ENCODE measurements at regions of chr1 and their contacts with region 1.

Region 1: DNA sequence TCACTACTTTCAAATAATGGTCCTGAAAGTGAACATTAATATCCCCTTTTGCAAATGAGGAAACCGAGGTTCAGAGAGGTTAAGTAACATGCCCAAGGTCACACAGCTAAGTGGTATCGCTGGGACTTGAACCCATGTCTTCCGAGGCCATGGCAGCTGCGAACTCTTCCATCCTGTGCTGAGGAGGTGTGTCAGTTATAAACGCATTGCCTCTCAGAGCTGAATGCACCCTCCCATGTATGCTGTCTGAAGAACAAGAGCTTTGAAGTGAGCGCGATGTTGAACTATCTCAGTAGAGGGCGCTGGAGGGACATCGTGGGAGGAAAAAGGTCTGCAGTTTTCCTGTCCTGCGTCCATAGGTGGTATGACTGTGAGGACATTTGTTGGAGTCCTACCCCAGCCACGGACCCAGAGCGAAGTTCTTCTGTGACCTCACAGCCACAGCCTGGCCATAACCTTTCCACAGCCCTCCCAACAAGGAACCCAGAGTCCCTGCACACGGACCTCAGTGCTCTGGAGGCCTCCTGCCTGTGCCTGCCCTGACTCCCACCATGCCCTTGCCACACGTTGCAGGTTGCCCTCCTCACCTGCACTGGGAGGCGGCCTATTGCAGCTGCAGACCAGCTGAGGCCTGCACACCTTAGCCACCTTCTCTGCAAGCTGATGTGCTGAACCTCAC is 7.5 kb downstream of the MYOC start:
- DNase-seq: peak; percentile 49
- ATAC-seq: peak; percentile 91
- H3K4me3 ChIP-seq: no peak overlapping the region
- H3K27ac ChIP-seq: no peak overlapping the region
- H3K4me1 ChIP-seq: no peaks in the 10 kb centered on the region
- H3K27me3 ChIP-seq: no peaks in the 10 kb centered on the region
- CTCF ChIP-seq: peak; percentile 66 to 82 (median 82)
- EP300 ChIP-seq: no peak
- POLR2A ChIP-seq: no peak
- RAD21 ChIP-seq: peak; percentile 70

Region 2: GRCh38 chr1:171566467-171566866 is 78.5 kb before region 1 on chr1:
- CTCF ChIA-PET with region 1: interaction called, 16 read pairs
- POLR2A ChIA-PET with region 1: interaction called, 5 read pairs
- RAD21 ChIA-PET with region 1: interaction called, 4 read pairs
- SMC1A ChIA-PET with region 1: interaction called, 16 read pairs
- in situ Hi-C with region 1: no loop called
- intact Hi-C with region 1: no loop called
- DNase-seq: no peak
- ATAC-seq: no peak
- H3K4me3 ChIP-seq: no peak overlapping the region
- H3K27ac ChIP-seq: no peak overlapping the region
- H3K4me1 ChIP-seq: no peaks in the 10 kb centered on the region
- H3K27me3 ChIP-seq: no peaks in the 10 kb centered on the region
- CTCF ChIP-seq: peak in 2 of 3 experiments; percentile 5 to 28; a peak in 2 of 6 replicates
- EP300 ChIP-seq: no peak
- POLR2A ChIP-seq: no peak
- RAD21 ChIP-seq: no peak

Region 3: GRCh38 chr1:171610385-171610784 is 34.6 kb before region 1 on chr1:
- CTCF ChIA-PET with region 1: interaction called, 22 read pairs
- POLR2A ChIA-PET with region 1: interaction called, 5 read pairs
- RAD21 ChIA-PET with region 1: interaction called, 12 read pairs
- SMC1A ChIA-PET with region 1: interaction called, 16 read pairs
- in situ Hi-C with region 1: no loop called
- intact Hi-C with region 1: loop called (anchors 5 kb)
- DNase-seq: no peak
- ATAC-seq: peak; percentile 74
- H3K4me3 ChIP-seq: no peak overlapping the region
- H3K27ac ChIP-seq: no peak overlapping the region
- H3K4me1 ChIP-seq: peaks cover 5% of the 10 kb centered on the region
- H3K27me3 ChIP-seq: no peaks in the 10 kb centered on the region
- CTCF ChIP-seq: no peak
- EP300 ChIP-seq: peak; percentile 38 to 68; a peak in 3 of 4 replicates
- POLR2A ChIP-seq: no peak
- RAD21 ChIP-seq: no peak

Region 4: GRCh38 chr1:171654942-171655745 is 10.2 kb after region 1 on chr1:
- CTCF ChIA-PET with region 1: interaction called, 68 read pairs
- POLR2A ChIA-PET with region 1: interaction called, 3 read pairs
- RAD21 ChIA-PET with region 1: interaction called, 19 read pairs
- SMC1A ChIA-PET with region 1: interaction called, 32 read pairs
- in situ Hi-C with region 1: no loop called
- intact Hi-C with region 1: no loop called
- DNase-seq: no peak
- ATAC-seq: peak; percentile 97
- H3K4me3 ChIP-seq: no peak overlapping the region
- H3K27ac ChIP-seq: no peak overlapping the region
- H3K4me1 ChIP-seq: no peaks in the 10 kb centered on the region
- H3K27me3 ChIP-seq: peaks cover 0 to 3% of the 10 kb centered on the region in 2 experiments; a peak in 1 of 4 replicates
- CTCF ChIP-seq: peak; percentile 62 to 89 (median 86)
- EP300 ChIP-seq: no peak
- POLR2A ChIP-seq: no peak
- RAD21 ChIP-seq: peak; percentile 62

Region 5: DNA sequence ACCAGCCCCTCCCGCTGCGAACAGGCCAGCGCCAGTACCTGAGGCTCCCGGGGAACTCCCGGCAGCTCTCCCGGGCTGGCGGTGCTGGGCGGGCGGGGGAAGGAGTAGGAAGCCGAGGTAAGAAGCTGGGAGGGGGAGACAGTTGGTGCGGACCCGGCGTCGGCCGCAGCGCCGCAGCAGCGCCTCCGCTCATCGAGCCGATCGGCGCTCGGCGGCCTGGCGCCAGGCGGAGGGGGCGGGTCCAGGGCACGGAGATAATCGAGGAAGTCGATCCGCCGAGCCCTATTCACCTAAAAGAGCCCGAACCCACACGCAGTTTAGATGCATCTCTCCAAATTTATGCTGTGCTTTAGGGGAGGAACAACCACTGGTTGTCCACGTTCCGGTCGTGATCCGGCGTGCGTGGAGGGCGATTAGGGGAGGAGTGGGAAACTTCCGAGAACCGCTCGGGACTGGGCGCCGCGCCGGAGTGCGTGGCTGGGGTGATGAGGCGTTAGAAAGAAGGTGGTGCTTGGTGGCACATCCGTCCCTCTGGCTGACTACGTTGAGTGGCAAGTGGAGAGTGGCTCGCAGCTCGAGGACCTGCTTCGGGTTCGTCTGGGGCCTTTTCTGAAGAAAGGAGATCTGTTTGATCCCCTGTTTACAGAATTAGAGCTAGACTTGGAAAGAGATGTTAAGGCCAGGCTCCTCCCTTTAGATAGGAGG is 97.1 kb after region 1 on chr1 and contains the start of gene VAMP4:
- CTCF ChIA-PET with region 1: interaction called, 9 read pairs
- POLR2A ChIA-PET with region 1: no interaction called
- RAD21 ChIA-PET with region 1: interaction called, 11 read pairs
- SMC1A ChIA-PET with region 1: interaction called, 4 read pairs
- in situ Hi-C with region 1: no loop called
- intact Hi-C with region 1: no loop called
- DNase-seq: peak; percentile 59
- ATAC-seq: peak; percentile 95
- H3K4me3 ChIP-seq: peak within 1 kb of the TSS; percentile 83
- H3K27ac ChIP-seq: peak within 1 kb of the TSS; percentile 92
- H3K4me1 ChIP-seq: peaks cover 4% of the 10 kb centered on the region
- H3K27me3 ChIP-seq: no peaks in the 10 kb centered on the region
- CTCF ChIP-seq: no peak
- EP300 ChIP-seq: no peak
- POLR2A ChIP-seq: peak; percentile 91
- RAD21 ChIP-seq: no peak
- polyA plus RNA-seq, gene VAMP4: 0.90 to 1.5 TPM

Region 6: GRCh38 chr1:171984850-171985485 is 340.0 kb after region 1 on chr1:
- CTCF ChIA-PET with region 1: interaction called, 85 read pairs
- POLR2A ChIA-PET with region 1: interaction called, 3 read pairs
- RAD21 ChIA-PET with region 1: interaction called, 15 read pairs
- SMC1A ChIA-PET with region 1: interaction called, 15 read pairs
- in situ Hi-C with region 1: loop called (anchors 5 kb)
- intact Hi-C with region 1: no loop called
- DNase-seq: no peak
- ATAC-seq: peak; percentile 88
- H3K4me3 ChIP-seq: no peak overlapping the region
- H3K27ac ChIP-seq: no peak overlapping the region
- H3K4me1 ChIP-seq: no peaks in the 10 kb centered on the region
- H3K27me3 ChIP-seq: no peaks in the 10 kb centered on the region; a peak in 1 of 4 replicates
- CTCF ChIP-seq: peak; percentile 71 to 77 (median 74)
- EP300 ChIP-seq: no peak
- POLR2A ChIP-seq: no peak
- RAD21 ChIP-seq: peak; percentile 76

Measured in GM12878 (cell line).